ENCODE measurements at regions of chr3 and their contacts with region 1.

Region 1: GRCh38 chr3:186540221-186540834 is 3.9 kb downstream of the CRYGS start:
- DNase-seq: peak; percentile 95
- ATAC-seq: peak; percentile 76
- H3K4me3 ChIP-seq: no peak overlapping the region
- H3K27ac ChIP-seq: peak overlapping the region; percentile 57
- H3K4me1 ChIP-seq: peaks cover 33% of the 10 kb centered on the region
- H3K27me3 ChIP-seq: no peaks in the 10 kb centered on the region
- CTCF ChIP-seq: peak; percentile 95

Region 2: DNA sequence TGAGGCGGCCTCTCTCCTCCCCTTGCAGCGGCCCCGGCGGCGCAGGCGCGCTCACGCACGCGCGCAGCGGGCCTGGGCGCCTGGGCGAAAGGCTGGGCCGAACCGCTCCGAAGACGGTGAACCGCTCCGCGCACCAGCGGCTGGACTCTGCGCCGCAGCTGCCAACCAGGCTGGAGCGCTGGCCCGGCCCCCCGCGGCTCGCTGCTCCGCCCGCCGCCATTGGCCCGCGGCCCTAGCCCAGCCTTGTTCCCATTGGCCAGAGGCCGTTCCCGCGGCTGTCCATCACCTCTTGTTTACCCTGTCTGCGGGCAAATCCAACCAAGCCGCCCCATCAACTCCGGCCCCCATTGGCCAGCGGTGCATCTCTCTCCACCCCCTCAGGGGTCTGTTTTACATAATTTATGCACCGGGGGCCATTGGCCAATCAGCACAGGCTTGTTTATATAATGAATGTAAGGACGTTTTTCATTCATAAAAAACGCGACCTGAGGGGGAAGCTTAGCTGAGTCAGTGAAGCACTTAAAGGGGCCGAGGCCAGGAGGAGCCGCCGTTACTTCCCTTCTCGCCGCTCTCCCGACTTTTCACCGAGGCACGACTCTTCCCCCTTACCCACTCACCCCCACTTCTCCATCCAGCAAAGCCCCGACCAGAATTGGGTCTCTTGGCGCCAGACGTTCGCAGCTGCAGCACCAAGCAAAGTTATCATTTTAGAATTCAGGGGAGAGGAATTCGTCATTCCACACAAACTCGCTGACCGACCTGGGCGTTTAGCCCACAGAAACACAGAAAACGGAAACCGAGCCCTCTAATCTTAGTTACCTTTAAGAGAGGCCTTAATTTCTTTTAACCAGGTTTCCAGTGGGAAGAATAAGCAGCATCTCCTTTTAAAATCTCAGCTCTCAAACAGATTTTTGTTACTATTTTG is 431.1 kb before region 1 on chr3 and contains the start of gene ETV5:
- CTCF ChIA-PET with region 1: interaction called, 6 read pairs
- POLR2A ChIA-PET with region 1: no interaction called
- intact Hi-C with region 1: loop called (anchors 10 kb)
- DNase-seq: peak; percentile 99
- ATAC-seq: peak; percentile 90
- H3K4me3 ChIP-seq: peak within 1 kb of the TSS; percentile 96
- H3K27ac ChIP-seq: peak within 1 kb of the TSS; percentile 56
- H3K4me1 ChIP-seq: peaks cover 21% of the 10 kb centered on the region
- H3K27me3 ChIP-seq: no peaks in the 10 kb centered on the region
- CTCF ChIP-seq: no peak
- total RNA-seq, gene ETV5: 41.4 and 60.6 TPM in 2 replicates

Region 3: DNA sequence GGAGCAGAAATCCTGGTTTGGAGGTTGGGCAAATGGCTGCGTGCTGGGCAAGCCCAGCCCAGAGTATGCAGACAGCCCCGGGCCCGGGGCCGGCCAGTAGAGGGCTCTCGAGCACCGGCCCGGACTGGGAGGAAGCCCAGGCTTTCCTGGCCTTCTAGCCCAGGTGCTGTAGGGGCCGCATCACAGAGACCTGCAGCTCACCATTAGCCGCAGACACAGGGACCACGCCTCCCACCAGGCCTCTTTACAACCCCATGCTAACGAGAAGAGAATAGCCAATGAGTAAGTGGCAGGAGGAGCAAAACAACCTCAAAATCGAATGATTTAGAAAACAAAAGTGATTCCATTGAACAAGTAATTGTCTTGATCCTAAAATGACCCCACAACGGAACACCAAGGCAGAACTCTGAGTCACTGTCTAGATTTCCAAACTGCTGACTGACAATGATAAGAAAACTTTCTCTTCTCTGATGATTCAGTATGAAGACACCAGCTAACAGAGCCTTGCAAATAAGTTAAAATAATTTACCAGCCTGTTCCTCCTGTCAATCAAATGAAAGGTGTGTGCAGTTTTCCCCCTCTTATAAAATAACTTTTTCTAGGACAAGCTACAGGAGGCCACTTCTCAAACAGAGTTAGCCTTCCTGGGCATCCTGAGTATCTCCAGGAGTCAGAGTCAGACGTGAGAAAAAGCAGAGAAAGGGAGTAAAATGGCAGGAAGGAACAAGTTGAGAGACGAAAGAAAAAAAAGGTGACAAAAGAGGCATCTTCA is 280.5 kb before region 1 on chr3:
- CTCF ChIA-PET with region 1: interaction called, 28 read pairs
- POLR2A ChIA-PET with region 1: no interaction called
- intact Hi-C with region 1: loop called (anchors 1 kb)
- DNase-seq: peak; percentile 92
- ATAC-seq: peak; percentile 100
- H3K4me3 ChIP-seq: peak overlapping the region; percentile 50
- H3K27ac ChIP-seq: no peak overlapping the region
- H3K4me1 ChIP-seq: peaks cover 14% of the 10 kb centered on the region
- H3K27me3 ChIP-seq: no peaks in the 10 kb centered on the region
- CTCF ChIP-seq: peak; percentile 96

Region 4: GRCh38 chr3:186524616-186525015 is 15.7 kb before region 1 on chr3:
- CTCF ChIA-PET with region 1: interaction called, 18 read pairs
- POLR2A ChIA-PET with region 1: no interaction called
- intact Hi-C with region 1: no loop called
- DNase-seq: no peak
- ATAC-seq: no peak
- H3K4me3 ChIP-seq: no peak overlapping the region
- H3K27ac ChIP-seq: no peak overlapping the region
- H3K4me1 ChIP-seq: no peaks in the 10 kb centered on the region
- H3K27me3 ChIP-seq: no peaks in the 10 kb centered on the region; the same call in none of the 2 replicates
- CTCF ChIP-seq: no peak

Region 5: GRCh38 chr3:186551387-186551786 is 11.1 kb after region 1 on chr3:
- CTCF ChIA-PET with region 1: no interaction called
- POLR2A ChIA-PET with region 1: no interaction called
- intact Hi-C with region 1: no loop called
- DNase-seq: peak; percentile 13
- ATAC-seq: peak; percentile 37; the same call in 1 of the 2 replicates
- H3K4me3 ChIP-seq: no peak overlapping the region
- H3K27ac ChIP-seq: no peak overlapping the region
- H3K4me1 ChIP-seq: no peaks in the 10 kb centered on the region
- H3K27me3 ChIP-seq: no peaks in the 10 kb centered on the region
- CTCF ChIP-seq: 0 out of 2 replicates have a peak, but pooled peaks have one; percentile 9

Region 6: DNA sequence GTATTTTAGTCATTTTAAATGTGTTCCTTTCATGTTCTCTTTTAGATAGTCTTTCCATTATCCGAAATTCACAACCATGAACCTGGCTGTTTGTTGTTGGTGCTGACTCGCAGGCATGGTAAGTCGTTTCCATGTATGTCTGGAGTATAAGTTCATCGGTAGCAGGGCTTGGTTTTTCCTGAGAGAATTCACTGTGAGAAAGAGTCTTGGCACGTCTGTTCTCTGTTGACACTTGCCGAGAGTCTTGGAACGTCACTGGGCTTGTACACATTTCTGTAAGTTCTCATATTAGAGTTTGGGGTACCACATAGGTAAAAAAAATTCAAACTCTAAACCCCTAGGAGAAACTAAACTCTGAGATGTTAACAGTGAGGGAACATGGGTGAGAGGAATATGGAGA is 213.7 kb after region 1 on chr3:
- CTCF ChIA-PET with region 1: no interaction called
- POLR2A ChIA-PET with region 1: no interaction called
- intact Hi-C with region 1: loop called (anchors 2 kb)
- DNase-seq: no peak
- ATAC-seq: no peak
- H3K4me3 ChIP-seq: 0 out of 2 replicates have a peak overlapping the region, but pooled peaks have one; percentile 47
- H3K27ac ChIP-seq: peak overlapping the region; percentile 88
- H3K4me1 ChIP-seq: peaks cover 17% of the 10 kb centered on the region
- H3K27me3 ChIP-seq: no peaks in the 10 kb centered on the region
- CTCF ChIP-seq: no peak

Region 7: DNA sequence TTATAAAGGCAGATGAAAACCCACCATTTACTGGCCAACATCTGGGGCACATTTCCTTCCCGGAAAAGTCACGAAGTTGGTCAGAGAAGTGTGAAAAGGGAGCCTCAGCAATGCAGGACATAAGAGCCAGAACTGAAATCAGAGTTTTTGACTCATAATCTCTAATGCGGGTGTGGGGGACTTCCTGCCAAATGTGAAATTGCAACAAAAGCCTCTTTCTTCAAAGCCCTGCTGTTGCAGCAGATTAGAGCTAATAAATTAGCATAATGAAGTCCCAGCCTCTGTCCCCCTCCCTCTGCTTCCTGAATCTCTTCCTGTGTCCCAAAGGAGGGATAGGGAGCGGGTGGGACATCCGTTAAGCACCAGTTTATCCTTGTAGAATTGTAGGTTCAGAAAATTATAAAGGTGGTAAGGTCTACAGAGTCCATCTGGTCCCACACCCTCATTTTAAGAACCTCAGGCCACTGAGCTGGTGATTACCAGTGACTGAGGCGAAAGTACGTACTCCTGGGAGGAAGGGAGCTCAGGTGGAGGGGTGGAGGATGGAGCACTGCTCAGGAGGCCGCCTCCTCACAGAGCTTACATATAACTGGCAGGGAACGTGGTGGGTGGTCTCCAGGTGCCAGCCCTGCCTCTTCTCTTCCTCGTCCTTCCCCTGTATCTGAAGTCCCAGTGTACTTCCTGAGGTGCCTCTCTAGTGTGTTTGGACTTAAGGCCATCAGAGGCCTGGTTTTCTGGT is 425.0 kb after region 1 on chr3:
- CTCF ChIA-PET with region 1: no interaction called
- POLR2A ChIA-PET with region 1: no interaction called
- intact Hi-C with region 1: no loop called
- DNase-seq: no peak
- ATAC-seq: no peak
- H3K4me3 ChIP-seq: no peak overlapping the region
- H3K27ac ChIP-seq: no peak overlapping the region
- H3K4me1 ChIP-seq: no peaks in the 10 kb centered on the region
- H3K27me3 ChIP-seq: no peaks in the 10 kb centered on the region
- CTCF ChIP-seq: no peak